GM10248 (cell line): ENCODE measurements at regions of chr4 and their contacts with region 1.

Region 1: GRCh38 chr4:127965062-127965802 is at the starts of genes ABHD18 and MFSD8:
- DNase-seq: peak; percentile 98
- CTCF ChIP-seq: no peak

Region 2: DNA sequence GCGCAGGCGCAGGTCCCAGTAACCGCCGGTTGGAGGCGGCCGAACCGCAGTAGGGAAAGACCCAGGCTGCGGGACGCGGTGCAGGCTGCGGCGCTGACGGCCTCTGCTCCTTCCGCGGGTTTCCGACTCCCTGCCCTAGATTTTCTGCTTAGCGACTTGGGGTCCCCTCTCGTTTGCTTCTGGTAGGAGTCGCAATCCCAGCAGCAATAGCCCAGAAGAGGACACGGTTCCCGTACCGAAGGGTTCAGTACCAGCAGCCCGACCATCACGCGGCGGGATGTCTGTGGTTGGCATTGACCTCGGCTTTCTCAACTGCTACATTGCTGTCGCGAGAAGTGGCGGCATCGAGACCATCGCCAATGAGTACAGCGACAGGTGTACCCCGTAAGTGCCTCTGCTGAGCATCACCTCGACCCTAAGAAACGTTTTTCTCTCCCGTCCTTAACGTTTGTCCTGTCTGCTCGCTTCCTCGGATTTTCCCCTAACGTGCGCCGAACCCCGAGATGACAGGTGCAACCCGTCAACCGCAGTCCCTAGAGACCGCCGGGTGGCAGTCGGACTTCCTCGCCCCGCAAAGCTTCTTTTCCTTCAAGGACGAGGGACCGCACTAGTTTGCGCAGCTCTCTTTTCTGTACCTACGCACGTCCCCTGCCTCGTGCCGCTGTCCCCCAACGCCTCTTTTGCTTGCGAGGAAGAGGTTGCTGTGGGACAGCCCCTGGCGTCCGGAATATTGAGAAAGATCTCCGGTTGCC is 182.8 kb before region 1 on chr4 and contains the start of gene HSPA4L:
- CTCF ChIA-PET with region 1: interaction called, 5 read pairs
- POLR2A ChIA-PET with region 1: interaction called, 11 read pairs
- DNase-seq: peak; percentile 62
- CTCF ChIP-seq: peak; percentile 26

Region 3: DNA sequence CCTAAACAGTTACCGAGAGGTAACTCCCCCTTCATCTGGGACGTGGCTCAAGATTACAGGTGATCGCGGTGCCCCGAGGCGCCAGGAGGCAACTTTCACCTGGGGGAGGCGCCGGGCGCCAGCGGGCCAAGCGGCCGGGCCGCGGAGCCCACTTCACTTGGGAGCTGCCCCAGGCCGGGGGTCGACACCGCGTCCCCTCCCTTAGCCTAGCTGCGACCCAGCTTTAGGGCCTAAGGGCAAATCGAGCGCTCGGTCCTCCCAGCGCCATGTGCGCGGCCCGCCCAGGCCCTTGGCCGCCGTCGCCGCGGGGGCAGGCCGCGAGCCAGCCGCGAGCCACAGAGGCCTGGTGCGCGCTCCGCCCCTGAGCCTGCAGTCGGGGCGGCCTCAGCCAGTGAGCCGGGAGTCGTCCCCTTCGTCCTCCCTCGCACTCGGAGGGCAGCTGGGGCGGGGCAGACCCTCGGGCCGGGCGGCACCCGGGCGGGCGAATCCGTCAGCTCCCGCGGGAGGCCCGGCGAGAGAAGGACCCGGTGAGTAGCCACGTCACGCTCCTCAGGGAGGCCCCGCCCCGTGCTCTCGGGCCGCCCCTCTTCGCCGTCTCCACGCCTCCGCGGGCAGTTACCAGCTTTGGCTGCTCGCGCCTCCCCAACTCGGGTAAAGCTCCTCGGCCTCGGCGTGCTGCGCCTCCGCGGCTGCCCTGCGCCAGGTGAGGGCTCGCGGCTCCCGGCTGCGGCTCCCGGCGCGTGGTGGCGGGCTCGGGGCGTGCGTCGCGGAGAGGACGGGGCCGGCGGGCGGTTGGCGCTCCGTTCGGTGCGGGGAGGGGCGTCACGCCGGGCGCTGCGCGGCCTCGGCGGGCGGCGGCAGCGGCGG is 95.7 kb after region 1 on chr4 and contains the start of gene LARP1B:
- CTCF ChIA-PET with region 1: interaction called, 3 read pairs
- POLR2A ChIA-PET with region 1: interaction called, 15 read pairs
- DNase-seq: peak; percentile 98
- CTCF ChIP-seq: no peak

Region 4: DNA sequence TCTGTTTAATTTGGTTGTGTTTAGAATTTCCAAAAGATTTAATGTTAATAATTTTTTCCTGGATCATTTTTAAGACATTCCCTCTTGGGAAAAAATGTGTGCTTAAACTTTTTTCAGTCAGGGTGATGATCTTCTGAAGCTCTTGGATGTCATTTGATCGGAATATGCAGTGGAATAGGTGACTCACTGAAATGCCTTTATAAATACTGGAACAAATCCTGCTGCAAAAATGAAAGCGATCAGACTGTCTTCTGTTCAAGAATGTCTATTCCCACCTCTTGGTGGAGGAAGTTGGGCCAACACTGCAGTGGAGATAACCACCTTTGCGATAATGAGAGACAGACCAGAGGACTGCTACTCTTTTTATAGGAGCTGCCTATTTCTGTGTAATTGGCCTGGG is 142.5 kb after region 1 on chr4:
- CTCF ChIA-PET with region 1: no interaction called
- POLR2A ChIA-PET with region 1: no interaction called
- DNase-seq: no peak
- CTCF ChIP-seq: no peak